ENCODE measurements at regions of chr7 and their contacts with region 1.

Region 1: GRCh38 chr7:115087437-115087836 is 165.5 kb downstream of the MDFIC start:
- DNase-seq: no peak
- ATAC-seq: peak; percentile 81

Region 2: DNA sequence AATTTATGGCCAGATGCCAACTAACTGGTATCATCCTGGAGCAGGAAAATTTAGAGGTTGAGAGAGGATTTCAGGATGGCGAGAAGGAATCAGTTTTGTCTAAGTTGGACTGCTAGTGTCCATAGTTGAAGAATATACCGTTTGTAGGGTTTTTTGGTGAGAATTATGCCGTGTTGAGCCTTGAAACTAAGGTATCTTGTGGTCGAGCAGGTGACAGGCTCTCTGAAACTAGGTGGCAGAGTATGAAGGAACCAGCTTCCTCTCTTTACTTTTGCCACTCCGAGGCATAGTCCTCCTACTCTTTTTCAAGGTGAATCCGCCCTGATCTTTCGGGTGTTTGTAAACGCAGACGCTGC is 155.8 kb before region 1 on chr7:
- intact Hi-C with region 1: no loop called
- DNase-seq: no peak
- ATAC-seq: no peak

Region 3: GRCh38 chr7:115145512-115145911 is 58.1 kb after region 1 on chr7:
- intact Hi-C with region 1: loop called (anchors 2 kb)
- DNase-seq: no peak
- ATAC-seq: peak; percentile 96

Measured in sciatic nerve (tissue), 2 donors.